Heart left ventricle (tissue), 16 donors: ENCODE measurements at regions of chr7 and their contacts with region 1.

Region 1: DNA sequence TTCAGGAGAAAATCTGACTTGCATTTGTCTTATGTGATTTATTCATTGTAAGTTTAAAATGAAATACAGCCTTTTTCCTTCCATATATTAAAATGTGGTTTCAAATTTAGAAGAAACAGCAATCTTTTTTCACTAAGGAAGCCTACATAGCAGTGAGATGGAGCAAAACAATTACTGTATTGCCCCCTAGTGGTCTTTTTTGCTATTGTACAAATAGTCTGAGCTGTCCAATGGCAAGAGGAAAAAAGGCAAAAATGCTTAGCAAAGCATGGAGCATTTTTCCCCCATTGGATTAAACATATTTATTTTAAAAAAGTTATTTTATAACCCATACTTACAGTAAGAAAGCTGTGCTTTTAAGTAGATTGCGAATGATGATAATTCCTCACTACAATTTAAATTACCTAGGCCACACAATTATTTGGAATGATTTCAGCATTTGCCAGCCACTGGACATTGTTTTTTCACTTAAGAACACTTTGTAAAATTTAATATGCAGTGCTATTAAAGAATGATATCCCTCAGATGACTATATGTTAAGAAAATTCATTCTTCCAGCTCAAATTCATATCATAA is 119.5 kb downstream of the CPED1 start:
- DNase-seq: no peak
- ATAC-seq: peak; percentile 51 to 84 (median 76)
- H3K4me3 ChIP-seq: no peak overlapping the region
- H3K27ac ChIP-seq: no peak overlapping the region
- H3K4me1 ChIP-seq: peaks cover 0 to 24% (median 7%) of the 10 kb centered on the region in 12 donors
- H3K27me3 ChIP-seq: no peaks in the 10 kb centered on the region
- CTCF ChIP-seq: peak; percentile 70 to 91 (median 84)
- POLR2A ChIP-seq: no peak

Region 2: GRCh38 chr7:120792091-120792860 is 315.7 kb before region 1 on chr7:
- intact Hi-C with region 1: loop called in 7 of 10 experiments (anchors 5 to 10 kb)
- DNase-seq: peak; percentile 65 to 83 (median 78)
- ATAC-seq: peak in 3 of 4 donors; percentile 75 to 92 (median 89)
- H3K4me3 ChIP-seq: no peak overlapping the region
- H3K27ac ChIP-seq: no peak overlapping the region
- H3K4me1 ChIP-seq: peaks cover 0 to 27% (median 5%) of the 10 kb centered on the region in 12 donors
- H3K27me3 ChIP-seq: no peaks in the 10 kb centered on the region
- CTCF ChIP-seq: peak; percentile 65 to 90 (median 80)
- POLR2A ChIP-seq: no peak

Region 3: DNA sequence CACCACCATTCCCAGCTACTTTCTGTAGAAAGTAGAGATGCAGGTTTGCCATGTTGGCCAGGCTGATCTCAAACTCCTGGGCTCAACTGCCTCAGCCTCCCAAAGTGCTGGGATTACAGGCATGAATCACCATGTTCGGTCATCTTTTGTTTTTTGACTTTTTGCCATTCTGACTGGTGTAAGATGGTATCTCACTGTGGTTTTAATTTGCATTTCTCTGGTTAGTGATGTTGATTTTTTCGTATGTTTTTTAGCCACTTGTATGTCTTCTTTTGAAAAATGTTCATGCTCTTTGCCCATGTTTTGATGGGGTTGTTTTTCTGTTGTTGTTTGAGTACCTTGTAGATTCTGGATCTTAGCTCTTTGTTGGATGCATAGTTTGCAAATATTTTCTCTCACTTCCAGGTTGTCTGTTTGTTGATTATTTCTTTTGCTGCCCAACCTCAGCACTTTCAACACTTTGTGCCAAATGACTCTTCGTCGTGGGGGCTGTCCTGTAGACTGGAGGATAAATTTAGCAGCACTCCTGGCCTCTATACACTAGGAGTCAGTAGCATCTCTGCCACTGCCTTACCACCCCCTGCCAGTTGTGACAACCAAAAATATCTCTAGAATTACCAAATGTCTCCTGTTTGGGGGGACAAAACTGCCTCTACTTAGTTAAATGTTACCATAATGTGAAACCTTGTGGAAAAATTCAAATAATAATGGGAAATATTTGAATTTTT is 126.0 kb before region 1 on chr7:
- intact Hi-C with region 1: loop called in 9 of 10 experiments (anchors 1 to 5 kb)
- DNase-seq: no peak
- ATAC-seq: no peak
- H3K4me3 ChIP-seq: no peak overlapping the region
- H3K27ac ChIP-seq: no peak overlapping the region
- H3K4me1 ChIP-seq: peaks cover 0 to 6% (median 0%) of the 10 kb centered on the region in 12 donors
- H3K27me3 ChIP-seq: no peaks in the 10 kb centered on the region
- CTCF ChIP-seq: no peak
- POLR2A ChIP-seq: no peak

Region 4: DNA sequence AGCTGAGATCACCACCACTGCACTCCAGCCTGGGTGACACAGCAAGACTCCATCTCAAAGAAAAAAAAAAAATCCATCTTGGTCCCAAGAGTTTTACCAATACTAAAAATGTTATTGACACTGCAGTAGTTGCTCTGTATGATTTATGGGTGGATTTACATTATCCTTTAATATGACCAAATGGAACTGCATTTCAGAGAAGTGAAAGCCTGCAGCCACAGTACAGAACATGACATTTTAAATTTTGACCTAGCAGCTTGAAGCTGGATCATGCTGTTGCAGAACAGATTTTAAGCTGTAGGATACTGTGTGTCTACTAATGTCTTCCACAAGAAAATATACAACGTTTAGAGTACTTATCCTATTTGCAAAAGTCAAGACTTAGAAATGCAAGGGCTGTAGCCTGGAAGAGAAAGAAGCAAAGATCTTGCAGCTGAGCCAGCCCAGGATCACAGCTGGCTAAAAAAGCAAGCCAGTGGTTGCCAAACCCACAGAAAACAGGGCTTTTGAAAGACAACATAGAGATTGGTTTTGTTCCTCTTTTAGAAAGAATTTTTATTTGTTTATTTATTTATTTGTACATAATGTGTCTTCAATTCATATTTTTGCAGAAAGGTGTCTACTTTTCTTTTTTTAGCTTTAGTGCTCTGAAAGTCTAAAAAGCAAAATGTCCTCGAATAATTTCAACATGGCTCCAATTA is 165.6 kb after region 1 on chr7:
- intact Hi-C with region 1: no loop called
- DNase-seq: no peak
- ATAC-seq: no peak
- H3K4me3 ChIP-seq: no peak overlapping the region
- H3K27ac ChIP-seq: no peak overlapping the region
- H3K4me1 ChIP-seq: peaks cover 0 to 7% (median 0%) of the 10 kb centered on the region in 12 donors
- H3K27me3 ChIP-seq: no peaks in the 10 kb centered on the region
- CTCF ChIP-seq: no peak
- POLR2A ChIP-seq: no peak

Region 5: DNA sequence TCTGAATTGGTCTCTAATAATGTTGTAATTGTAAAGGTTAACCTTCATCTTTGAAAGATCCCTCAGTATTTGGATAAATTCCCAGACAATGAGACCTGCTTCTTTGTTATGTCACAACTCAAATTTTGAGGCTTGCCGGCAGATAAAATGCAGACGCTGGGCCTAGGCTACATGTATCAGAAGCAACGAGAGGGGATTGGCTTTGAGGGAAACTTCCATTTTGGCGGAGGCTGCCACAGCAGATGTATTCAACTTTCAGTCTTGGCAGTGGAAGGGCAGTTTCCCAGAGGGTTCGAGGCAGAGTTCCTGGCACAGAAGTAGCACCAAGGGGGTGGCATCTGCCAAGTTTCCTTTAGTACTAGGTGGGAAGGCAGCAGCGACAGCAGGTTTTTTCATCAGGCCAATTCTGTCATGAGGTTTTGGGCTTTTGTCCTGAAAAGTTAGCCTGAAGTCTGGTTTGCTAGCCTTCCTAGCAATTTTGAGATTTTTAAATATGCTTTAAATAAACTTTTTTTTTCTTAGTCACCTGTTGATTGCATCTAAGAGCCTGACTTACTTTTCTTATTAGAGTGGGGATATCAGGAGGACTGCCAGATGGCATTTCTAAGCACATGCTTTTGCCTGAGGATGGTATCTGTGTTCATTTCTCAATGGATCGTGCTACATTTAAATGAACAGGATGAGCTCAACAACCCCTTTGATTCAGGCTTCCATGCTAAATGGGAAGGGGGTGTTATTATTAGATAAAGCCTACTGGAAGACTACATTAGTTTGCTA is 377.6 kb after region 1 on chr7:
- intact Hi-C with region 1: no loop called
- DNase-seq: peak in 2 of 5 donors; percentile 18 to 34
- ATAC-seq: peak in 2 of 4 donors; percentile 31 to 42
- H3K4me3 ChIP-seq: no peak overlapping the region
- H3K27ac ChIP-seq: peak overlapping the region in 4 of 12 donors; percentile 17 to 62 (median 40)
- H3K4me1 ChIP-seq: peaks cover 0 to 8% (median 0%) of the 10 kb centered on the region in 12 donors
- H3K27me3 ChIP-seq: no peaks in the 10 kb centered on the region
- CTCF ChIP-seq: no peak
- POLR2A ChIP-seq: no peak